Adrenal gland (tissue), 19 donors: ENCODE measurements at regions of chr17 and their contacts with region 1.

Region 1: GRCh38 chr17:42405963-42406495 is 17.0 kb downstream of the CAVIN1 start:
- DNase-seq: peak; percentile 77 to 94 (median 84)
- H3K4me3 ChIP-seq: no peak overlapping the region
- H3K27ac ChIP-seq: peak overlapping the region in 3 of 5 donors; percentile 63 to 78 (median 72)
- H3K4me1 ChIP-seq: peaks cover 33 to 47% of the 10 kb centered on the region in 2 donors
- H3K27me3 ChIP-seq: no peaks in the 10 kb centered on the region
- CTCF ChIP-seq: peak; percentile 69 to 95 (median 86)
- POLR2A ChIP-seq: no peak

Region 2: GRCh38 chr17:42221937-42222745 is 183.9 kb before region 1 on chr17:
- intact Hi-C with region 1: loop called in 1 of 2 experiments (anchors 10 kb)
- DNase-seq: peak in 6 of 7 donors; percentile 46 to 77 (median 66)
- H3K4me3 ChIP-seq: no peak overlapping the region
- H3K27ac ChIP-seq: no peak overlapping the region
- H3K4me1 ChIP-seq: no peaks in the 10 kb centered on the region
- H3K27me3 ChIP-seq: no peaks in the 10 kb centered on the region
- CTCF ChIP-seq: peak; percentile 31 to 69 (median 56)
- POLR2A ChIP-seq: no peak

Region 3: DNA sequence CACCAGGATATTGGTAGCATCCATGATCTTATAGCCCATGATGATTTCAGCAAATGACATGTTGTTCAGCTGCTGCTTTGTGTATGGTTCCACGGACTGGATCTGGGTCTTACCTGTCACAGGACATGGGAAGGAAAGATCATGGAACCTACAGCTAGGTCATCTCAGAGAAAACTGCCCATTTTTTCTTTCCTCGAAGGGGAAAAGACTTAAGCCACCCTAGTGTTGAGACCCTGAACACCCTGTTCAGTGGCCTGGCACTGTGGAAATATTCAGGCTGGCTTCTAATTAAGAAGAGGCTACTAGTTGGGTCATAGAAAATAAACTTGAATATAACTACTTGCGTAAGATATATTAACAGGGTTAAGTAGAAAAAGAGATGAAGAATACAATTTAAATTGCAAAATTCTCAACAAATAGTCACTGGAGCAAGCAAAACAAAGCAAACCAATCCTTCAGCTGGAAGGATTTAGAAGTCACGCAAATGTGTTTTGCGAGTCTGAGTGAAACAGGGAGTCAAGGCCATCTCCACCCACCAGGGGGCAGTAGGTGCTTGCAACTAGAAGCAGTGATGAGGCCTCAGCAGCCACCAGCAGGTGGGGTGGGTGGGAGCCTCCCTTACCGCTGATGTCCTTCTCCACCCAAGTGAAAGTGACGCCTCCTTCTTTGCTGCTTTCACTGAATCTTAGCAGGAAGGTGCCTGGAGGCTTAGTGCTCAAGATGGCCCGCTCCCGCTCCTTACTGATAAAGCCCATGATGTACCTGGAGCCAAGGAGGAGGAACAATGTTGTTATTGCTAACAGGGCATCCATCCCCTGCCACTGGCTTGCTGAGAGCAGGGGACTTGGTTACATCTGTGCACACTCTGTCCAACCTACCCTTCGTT is 83.4 kb before region 1 on chr17:
- intact Hi-C with region 1: loop called (anchors 2 to 5 kb)
- DNase-seq: peak; percentile 91 to 99 (median 97)
- H3K4me3 ChIP-seq: no peak overlapping the region
- H3K27ac ChIP-seq: peak overlapping the region in 2 of 5 donors; percentile 28 to 37
- H3K4me1 ChIP-seq: peaks cover 0 to 6% of the 10 kb centered on the region in 2 donors
- H3K27me3 ChIP-seq: no peaks in the 10 kb centered on the region
- CTCF ChIP-seq: peak; percentile 95 to 100 (median 100)
- POLR2A ChIP-seq: no peak

Region 4: DNA sequence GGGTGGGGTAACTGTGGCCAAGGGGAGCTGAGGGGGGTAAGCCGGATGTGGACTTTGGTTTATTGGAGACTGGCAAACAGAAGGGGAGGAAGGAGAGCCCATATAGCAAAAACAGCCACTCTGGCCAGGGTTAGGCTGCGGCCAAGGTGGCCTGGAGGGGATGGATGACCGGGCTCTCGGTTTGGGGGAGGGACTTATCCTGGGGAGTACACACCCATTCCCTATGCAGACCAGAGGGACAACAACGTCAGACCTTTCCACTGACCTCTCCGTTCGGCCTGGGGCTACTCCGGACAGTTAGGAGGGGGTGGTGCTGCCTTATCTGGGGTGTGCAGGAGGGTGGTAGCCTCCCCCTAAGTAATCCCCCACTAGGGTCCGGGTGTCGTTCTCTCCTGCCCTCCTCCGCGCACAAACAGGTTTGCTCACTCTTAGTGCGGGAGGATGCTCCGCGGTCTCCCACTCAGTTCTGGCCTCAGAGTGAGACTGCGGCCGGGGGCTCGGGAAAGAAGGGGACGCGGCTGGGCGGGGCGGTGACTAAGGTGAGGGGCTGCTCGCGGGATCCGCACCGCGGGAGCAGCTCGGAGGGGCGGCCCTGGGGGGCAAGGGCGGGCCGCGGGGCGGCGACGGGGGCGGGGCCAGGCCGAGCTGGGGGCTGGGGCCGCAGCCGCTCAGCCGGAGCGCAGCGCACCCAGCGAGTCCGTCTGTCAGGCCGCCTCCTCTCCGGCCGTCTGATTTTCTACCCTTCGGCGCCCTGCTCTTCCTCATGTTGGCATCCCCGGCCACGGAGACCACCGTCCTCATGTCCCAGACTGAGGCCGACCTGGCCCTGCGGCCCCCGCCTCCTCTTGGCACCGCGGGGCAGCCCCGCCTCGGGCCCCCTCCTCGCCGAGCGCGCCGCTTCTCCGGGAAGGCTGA is 374.2 kb after region 1 on chr17 and contains the start of gene WNK4:
- intact Hi-C with region 1: no loop called
- DNase-seq: no peak
- H3K4me3 ChIP-seq: peak within 1 kb of the TSS in 1 of 4 donors; percentile 38
- H3K27ac ChIP-seq: no peak within 1 kb of the TSS
- H3K4me1 ChIP-seq: peaks cover 0 to 16% of the 10 kb centered on the region in 2 donors
- H3K27me3 ChIP-seq: peaks cover 39% of the 10 kb centered on the region
- CTCF ChIP-seq: no peak
- POLR2A ChIP-seq: no peak
- total RNA-seq, gene WNK4: 0.18 to 0.46 (median 0.30) TPM in 4 of 9 donors, not detected in the others